ENCODE measurements at regions of chr6 and their contacts with region 1.

Region 1: DNA sequence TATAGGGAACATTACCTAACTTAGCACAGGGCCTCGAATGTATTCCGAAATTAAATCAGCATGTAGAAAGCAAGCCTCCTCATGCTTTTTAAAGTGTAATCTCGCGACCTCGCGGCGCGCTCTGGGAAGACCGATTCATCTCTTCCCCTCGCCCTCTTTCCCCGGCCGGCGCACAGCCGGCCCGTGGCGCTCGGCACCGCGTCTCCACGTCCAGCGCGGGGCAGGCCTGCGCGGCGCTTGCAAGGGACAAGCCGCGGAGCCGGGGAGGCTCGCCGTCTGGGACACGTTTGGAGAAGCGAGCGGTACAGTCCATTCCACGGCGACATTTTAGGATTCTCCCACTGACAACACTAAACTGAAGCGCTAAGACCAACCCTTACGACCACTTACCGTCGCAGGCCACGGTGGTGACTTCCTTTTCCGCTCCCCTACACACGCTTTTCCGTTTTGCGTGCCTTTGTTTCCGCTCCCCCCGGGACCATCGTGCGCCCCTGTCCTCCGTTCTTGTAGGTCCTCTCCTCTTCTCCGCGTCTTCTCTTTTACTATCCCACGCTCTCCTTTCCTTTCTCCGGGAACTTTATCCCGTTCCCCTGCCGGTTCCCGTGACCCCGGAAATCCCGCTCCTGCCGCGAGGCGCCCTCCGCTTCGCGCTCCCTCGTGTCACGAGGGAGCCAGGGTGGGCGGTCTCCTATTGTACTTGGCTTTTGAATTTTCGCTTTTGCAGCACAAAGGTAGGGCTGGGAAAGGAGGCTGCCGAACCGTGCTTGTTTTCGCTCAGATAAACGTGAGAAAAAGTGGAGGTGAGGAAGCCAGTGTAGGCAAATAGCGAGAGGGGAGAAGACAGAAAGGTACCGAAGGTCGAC is at the start of gene ECHDC1:
- DNase-seq: no peak
- H3K4me3 ChIP-seq: peak within 1 kb of the TSS; percentile 62 to 90 (median 76)
- H3K27ac ChIP-seq: peak within 1 kb of the TSS; percentile 82 to 90 (median 87)
- H3K4me1 ChIP-seq: peaks cover 30 to 53% (median 43%) of the 10 kb centered on the region in 4 donors
- H3K27me3 ChIP-seq: no peaks in the 10 kb centered on the region
- CTCF ChIP-seq: peak in 2 of 3 experiments; percentile 11 to 29
- EP300 ChIP-seq: no peak
- POLR2A ChIP-seq: no peak
- total RNA-seq, gene ECHDC1: 42.5 to 70.6 (median 57.9) TPM

Region 2: GRCh38 chr6:127415096-127415495 is 71.9 kb after region 1 on chr6:
- intact Hi-C with region 1: loop called (anchors 10 kb)
- DNase-seq: no peak
- H3K4me3 ChIP-seq: no peak overlapping the region
- H3K27ac ChIP-seq: no peak overlapping the region
- H3K4me1 ChIP-seq: peaks cover 0 to 2% (median 0%) of the 10 kb centered on the region in 4 donors
- H3K27me3 ChIP-seq: no peaks in the 10 kb centered on the region
- CTCF ChIP-seq: no peak
- EP300 ChIP-seq: no peak
- POLR2A ChIP-seq: no peak

Region 3: DNA sequence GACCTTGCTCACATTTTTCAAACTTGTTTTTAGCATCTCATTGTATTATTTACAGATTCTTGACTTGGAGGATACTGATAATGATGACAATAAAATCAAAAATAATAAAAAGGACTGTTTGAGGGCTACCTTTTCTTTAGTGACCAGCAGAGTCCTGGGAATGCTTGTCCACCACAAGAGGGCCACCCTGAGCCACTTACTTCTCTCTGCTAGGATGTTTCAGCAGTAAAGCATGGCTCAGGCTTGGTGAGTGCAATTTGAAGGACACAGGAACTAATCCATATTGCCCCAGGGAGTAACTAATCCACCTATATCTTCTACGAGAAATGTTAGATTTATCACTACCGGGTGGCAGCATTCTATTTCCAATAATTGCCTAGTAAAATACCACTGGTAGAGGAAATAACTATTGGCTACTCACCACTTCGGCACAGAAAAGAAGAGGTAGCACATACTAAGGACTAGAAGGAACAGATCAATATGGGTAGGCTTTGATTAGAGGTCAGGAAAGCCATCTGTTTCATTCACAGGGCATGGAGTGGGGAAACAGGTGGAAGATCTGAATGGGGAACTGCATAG is 121.8 kb after region 1 on chr6:
- intact Hi-C with region 1: loop called (anchors 5 kb)
- DNase-seq: no peak
- H3K4me3 ChIP-seq: no peak overlapping the region
- H3K27ac ChIP-seq: peak overlapping the region; percentile 70 to 83 (median 76)
- H3K4me1 ChIP-seq: peaks cover 3 to 61% (median 53%) of the 10 kb centered on the region in 4 donors
- H3K27me3 ChIP-seq: no peaks in the 10 kb centered on the region
- CTCF ChIP-seq: peak; percentile 76 to 87 (median 81)
- EP300 ChIP-seq: no peak
- POLR2A ChIP-seq: no peak

Measured in esophagus muscularis mucosa (tissue), 4 donors.